ENCODE measurements at regions of chr10 and their contacts with region 1.

Region 1: DNA sequence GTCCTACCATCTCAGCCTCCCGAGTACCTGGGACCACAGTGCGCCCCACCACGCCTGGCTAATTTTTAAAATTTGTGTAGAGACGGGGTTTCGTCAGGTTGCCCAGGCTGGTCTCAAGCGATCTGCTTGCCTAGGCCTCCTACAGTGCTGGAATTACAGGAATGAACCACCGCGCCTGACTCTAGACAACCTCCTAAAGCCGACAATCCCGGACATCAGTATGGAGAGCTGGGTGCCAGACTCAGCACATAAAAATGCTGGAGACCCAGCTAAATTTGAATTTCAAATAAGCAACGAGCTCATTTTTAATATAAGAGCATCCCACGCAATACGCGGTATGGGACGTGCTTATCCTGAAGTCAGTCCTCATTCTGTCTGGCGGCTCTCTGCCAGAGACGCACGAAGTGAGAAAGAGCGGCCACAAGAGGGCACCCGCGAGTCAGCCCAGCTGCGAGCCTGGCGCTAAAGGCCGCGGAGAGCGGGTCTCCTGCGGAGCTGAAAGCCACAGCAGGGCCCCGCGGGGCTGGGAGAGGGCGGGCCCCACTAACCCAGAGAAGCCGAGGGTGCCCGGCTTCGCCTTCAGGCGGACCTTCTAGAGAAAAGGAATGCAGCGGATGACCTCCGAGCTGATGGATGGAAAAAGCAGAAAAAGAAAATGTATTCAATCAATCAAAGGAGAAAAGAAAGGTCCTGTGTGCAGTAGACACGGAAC is 7.0 kb downstream of the CALY start:
- DNase-seq: peak; percentile 93
- H3K4me3 ChIP-seq: peak overlapping the region; percentile 21
- H3K27ac ChIP-seq: no peak overlapping the region
- H3K4me1 ChIP-seq: peaks cover 14% of the 10 kb centered on the region
- H3K27me3 ChIP-seq: peaks cover 43% of the 10 kb centered on the region
- CTCF ChIP-seq: peak; percentile 98

Region 2: DNA sequence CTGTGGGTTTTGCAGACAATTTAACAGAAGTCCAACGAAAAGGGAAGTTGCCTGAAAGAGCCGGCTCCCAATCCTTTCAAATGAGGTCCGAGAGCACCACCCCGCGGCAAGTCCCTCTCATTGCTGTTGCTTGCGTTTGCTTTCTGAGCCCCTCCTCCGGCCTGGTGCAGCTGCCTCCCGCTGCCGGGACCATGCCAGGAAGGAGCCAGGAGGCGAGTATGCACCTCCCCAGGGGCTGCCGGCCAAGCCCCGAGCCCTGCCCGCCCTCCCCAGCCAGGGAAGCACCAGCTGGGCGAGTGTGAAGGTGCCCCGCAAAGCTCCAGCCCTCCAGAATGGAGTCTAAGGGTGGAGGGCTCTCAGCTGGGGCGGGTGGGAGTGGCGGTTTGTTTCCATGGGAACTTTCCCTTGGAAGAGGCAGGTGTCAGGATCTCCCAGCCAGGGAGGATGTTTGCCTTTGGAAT is 1454.6 kb before region 1 on chr10:
- CTCF ChIA-PET with region 1: no interaction called
- POLR2A ChIA-PET with region 1: no interaction called
- intact Hi-C with region 1: no loop called
- DNase-seq: peak; percentile 89
- H3K4me3 ChIP-seq: no peak overlapping the region
- H3K27ac ChIP-seq: no peak overlapping the region
- H3K4me1 ChIP-seq: peaks cover 7% of the 10 kb centered on the region
- H3K27me3 ChIP-seq: no peaks in the 10 kb centered on the region
- CTCF ChIP-seq: peak; percentile 85

Region 3: DNA sequence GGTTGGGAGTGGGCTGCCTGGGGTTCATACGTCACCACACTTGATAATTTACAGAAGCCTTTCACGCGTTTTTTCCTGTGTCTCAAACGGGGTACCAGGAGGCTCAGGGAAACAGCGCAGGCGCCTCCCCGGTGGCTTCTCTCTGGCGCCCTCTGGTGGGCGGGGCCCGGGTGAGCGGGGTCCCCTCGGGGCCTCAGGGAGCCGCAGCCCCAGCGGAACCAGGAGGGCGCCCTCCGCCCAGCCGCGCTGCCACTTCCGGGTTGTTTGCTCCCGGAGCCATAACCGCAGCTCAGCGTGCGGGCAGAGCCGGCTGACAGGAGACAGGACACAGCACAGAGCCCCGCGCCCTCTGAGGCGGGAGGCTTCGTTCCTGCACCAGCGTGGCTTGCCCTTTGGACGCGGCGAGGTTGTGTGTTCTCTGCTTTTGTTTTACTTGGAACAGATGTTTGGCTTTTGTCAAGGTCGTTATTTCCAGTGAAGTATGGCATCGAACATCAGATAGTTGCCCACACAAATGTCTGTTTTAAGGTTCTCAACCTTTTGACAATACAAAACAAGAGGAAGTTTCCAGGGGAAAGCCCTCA is 190.6 kb after region 1 on chr10:
- CTCF ChIA-PET with region 1: interaction called, 3 read pairs
- POLR2A ChIA-PET with region 1: no interaction called
- intact Hi-C with region 1: loop called (anchors 5 kb)
- DNase-seq: peak; percentile 85
- H3K4me3 ChIP-seq: peak overlapping the region; percentile 37
- H3K27ac ChIP-seq: no peak overlapping the region
- H3K4me1 ChIP-seq: no peaks in the 10 kb centered on the region
- H3K27me3 ChIP-seq: peaks cover 75% of the 10 kb centered on the region
- CTCF ChIP-seq: peak; percentile 97